GM12878 (cell line): ENCODE measurements at regions of chr22 and their contacts with region 1.

Region 1: DNA sequence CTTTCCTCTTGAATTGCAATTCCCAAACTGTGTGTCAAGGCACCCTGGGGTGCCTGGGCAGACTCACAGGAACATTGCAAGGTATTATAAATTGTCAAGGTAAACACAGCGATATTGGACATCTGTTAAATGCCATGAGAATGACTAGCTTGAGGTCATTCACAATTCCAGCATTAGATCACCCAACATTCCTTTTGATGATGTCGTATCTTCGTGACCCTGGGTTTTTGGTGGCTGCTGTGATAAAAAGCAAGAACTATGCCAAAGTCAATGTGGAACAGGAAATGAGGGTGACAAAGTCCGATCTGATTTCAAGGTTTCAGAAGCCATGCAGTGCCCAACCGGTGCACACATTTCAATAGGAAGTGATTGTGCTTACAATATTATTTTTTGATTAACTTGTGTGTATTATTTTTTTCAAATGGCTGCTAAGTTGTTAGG is 458.4 kb downstream of the MIAT start:
- DNase-seq: no peak
- ATAC-seq: no peak
- H3K4me3 ChIP-seq: no peak overlapping the region
- H3K27ac ChIP-seq: no peak overlapping the region
- H3K4me1 ChIP-seq: no peaks in the 10 kb centered on the region
- H3K27me3 ChIP-seq: no peaks in the 10 kb centered on the region
- CTCF ChIP-seq: no peak
- EP300 ChIP-seq: no peak
- POLR2A ChIP-seq: no peak
- RAD21 ChIP-seq: no peak

Region 2: DNA sequence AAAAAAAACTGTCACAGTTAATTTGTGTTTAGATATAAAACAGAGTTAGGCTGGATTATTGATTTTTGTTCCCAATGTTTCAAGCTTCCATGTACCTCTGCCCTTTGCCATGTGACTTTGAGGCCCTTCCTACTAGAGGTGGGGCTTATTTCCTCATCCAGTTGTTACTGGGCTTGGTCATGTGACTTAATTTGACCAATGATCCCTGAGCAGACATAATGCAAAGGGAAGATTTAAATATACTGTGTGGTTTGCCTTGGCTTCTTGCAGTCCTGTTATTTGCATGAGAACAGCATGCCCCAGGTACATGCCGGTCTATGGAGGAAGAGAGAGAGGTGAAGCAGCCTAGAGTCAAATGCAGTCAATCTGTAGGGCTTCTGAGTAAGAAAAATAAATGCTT is 111.4 kb before region 1 on chr22:
- CTCF ChIA-PET with region 1: no interaction called
- POLR2A ChIA-PET with region 1: no interaction called
- RAD21 ChIA-PET with region 1: no interaction called
- SMC1A ChIA-PET with region 1: no interaction called
- in situ Hi-C with region 1: no loop called
- intact Hi-C with region 1: no loop called
- DNase-seq: no peak
- ATAC-seq: no peak
- H3K4me3 ChIP-seq: no peak overlapping the region
- H3K27ac ChIP-seq: no peak overlapping the region
- H3K4me1 ChIP-seq: no peaks in the 10 kb centered on the region
- H3K27me3 ChIP-seq: no peaks in the 10 kb centered on the region; a peak in 2 of 4 replicates
- CTCF ChIP-seq: no peak
- EP300 ChIP-seq: no peak
- POLR2A ChIP-seq: no peak
- RAD21 ChIP-seq: no peak

Region 3: DNA sequence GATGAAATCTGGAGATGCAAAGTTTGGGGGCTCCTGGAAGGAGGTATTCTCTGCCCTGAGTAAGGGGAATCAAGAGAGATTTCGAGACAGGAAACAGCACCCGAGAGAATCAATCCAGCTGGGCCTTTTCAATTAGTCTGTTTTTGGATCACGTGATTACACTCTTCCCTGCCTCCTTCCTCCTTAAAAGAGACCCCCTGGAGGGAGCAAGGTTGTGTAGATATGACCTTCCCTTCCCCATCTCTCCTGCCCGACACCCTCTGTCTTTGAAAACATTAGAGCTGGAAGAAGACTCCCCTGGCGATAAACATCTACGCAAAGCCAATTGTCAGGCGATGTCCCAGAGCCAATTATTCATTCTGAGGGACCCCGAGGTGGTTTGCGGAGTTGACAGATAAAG is 50.6 kb before region 1 on chr22:
- CTCF ChIA-PET with region 1: no interaction called
- POLR2A ChIA-PET with region 1: no interaction called
- RAD21 ChIA-PET with region 1: no interaction called
- SMC1A ChIA-PET with region 1: no interaction called
- in situ Hi-C with region 1: loop called (anchors 5 kb)
- intact Hi-C with region 1: no loop called
- DNase-seq: no peak
- ATAC-seq: no peak
- H3K4me3 ChIP-seq: no peak overlapping the region
- H3K27ac ChIP-seq: no peak overlapping the region
- H3K4me1 ChIP-seq: no peaks in the 10 kb centered on the region
- H3K27me3 ChIP-seq: no peaks in the 10 kb centered on the region; a peak in 1 of 4 replicates
- CTCF ChIP-seq: no peak
- EP300 ChIP-seq: no peak
- POLR2A ChIP-seq: no peak
- RAD21 ChIP-seq: no peak

Region 4: DNA sequence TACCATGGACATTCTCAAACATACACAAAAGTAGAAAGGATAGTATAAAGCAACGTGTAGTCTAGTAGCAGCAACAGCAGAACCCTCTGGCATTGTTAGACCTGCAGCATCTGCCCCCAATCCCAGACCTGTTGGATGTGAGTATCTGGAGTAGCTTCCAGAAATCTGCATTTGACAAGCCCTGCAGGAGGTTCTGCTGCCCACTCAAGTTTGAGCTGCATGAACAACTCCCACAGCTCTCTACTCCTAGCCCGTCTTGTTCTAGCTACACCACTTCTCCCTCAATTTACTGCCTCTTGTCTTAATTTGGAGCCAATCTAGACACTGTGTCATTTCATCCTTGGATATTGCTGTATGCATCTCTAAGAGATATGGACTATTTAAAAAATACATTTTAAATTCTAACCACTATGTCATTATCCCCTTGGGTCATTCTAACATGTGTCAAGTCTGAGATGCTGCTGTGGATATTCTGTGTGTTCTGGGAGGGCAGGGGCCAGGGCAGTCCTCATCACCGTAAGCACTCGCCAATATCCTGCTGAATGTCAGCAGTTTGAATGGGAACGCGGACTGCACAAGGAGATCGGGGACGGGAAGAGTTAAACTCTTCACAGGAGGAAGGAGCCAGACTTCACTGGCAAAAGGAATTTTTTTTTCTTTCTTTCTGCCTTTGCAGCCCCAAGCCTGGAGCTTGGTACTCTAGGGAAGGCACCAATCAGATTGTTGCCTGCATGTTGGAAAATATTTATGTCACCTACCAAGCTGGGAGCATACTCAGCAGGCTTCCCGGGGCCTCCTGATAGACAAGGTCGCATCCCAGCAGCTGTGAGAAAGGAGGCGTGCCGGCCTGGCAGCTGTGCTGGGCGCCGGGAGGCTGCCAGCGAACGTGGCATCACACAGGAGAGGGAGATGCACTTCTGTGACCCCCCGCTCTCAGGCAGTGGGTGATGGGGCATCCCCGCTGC is 29.5 kb before region 1 on chr22:
- CTCF ChIA-PET with region 1: no interaction called
- POLR2A ChIA-PET with region 1: no interaction called
- RAD21 ChIA-PET with region 1: no interaction called
- SMC1A ChIA-PET with region 1: no interaction called
- in situ Hi-C with region 1: no loop called
- intact Hi-C with region 1: no loop called
- DNase-seq: no peak
- ATAC-seq: no peak
- H3K4me3 ChIP-seq: no peak overlapping the region
- H3K27ac ChIP-seq: no peak overlapping the region
- H3K4me1 ChIP-seq: no peaks in the 10 kb centered on the region
- H3K27me3 ChIP-seq: no peaks in the 10 kb centered on the region; a peak in 2 of 4 replicates
- CTCF ChIP-seq: no peak
- EP300 ChIP-seq: no peak
- POLR2A ChIP-seq: no peak
- RAD21 ChIP-seq: no peak

Region 5: GRCh38 chr22:27170491-27170890 is 54.7 kb after region 1 on chr22:
- CTCF ChIA-PET with region 1: no interaction called
- POLR2A ChIA-PET with region 1: no interaction called
- RAD21 ChIA-PET with region 1: no interaction called
- SMC1A ChIA-PET with region 1: no interaction called
- in situ Hi-C with region 1: loop called (anchors 5 kb)
- intact Hi-C with region 1: no loop called
- DNase-seq: no peak
- ATAC-seq: no peak
- H3K4me3 ChIP-seq: no peak overlapping the region
- H3K27ac ChIP-seq: no peak overlapping the region
- H3K4me1 ChIP-seq: no peaks in the 10 kb centered on the region
- H3K27me3 ChIP-seq: no peaks in the 10 kb centered on the region; a peak in 2 of 4 replicates
- CTCF ChIP-seq: no peak
- EP300 ChIP-seq: no peak
- POLR2A ChIP-seq: no peak
- RAD21 ChIP-seq: no peak

Region 6: DNA sequence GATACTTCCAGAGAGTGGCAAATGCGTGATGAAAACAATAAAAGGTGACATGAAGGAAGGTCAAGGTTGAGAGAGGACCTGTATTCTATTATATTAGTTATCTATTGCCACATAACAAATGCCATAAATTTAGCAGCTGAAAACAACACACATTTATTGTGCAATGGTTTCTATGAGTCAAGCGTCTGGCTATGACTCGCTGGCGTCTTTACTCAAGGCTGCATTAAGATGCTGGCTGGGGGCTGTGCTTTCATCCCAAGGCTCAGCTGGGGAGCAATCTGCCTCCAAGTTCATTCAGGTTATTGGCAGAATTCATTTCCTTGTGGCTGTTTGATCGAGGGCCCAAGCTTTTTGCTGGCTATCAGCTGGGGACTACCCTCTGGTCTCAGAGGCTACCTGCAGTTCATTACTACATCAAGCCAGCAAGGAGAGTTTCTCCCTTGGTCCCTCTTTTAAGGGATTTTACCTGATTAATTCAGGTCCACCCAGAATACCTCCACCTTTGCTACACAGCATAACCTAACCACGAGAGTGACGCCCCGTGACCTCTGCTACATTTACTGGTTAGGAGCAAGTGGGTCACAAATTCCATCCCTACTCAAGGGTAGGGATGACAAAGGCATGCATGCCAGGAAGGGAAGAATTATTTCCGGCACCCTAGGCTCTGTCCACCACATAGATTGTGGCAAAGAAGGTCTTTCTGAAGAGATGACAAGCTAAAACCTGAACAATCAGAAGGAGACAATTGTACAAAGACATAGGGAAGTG is 136.6 kb after region 1 on chr22:
- CTCF ChIA-PET with region 1: no interaction called
- POLR2A ChIA-PET with region 1: no interaction called
- RAD21 ChIA-PET with region 1: no interaction called
- SMC1A ChIA-PET with region 1: no interaction called
- in situ Hi-C with region 1: no loop called
- intact Hi-C with region 1: no loop called
- DNase-seq: no peak
- ATAC-seq: no peak
- H3K4me3 ChIP-seq: no peak overlapping the region
- H3K27ac ChIP-seq: no peak overlapping the region
- H3K4me1 ChIP-seq: no peaks in the 10 kb centered on the region
- H3K27me3 ChIP-seq: no peaks in the 10 kb centered on the region
- CTCF ChIP-seq: no peak
- EP300 ChIP-seq: no peak
- POLR2A ChIP-seq: no peak
- RAD21 ChIP-seq: no peak